HEK293 (cell line): ENCODE measurements at regions of chr2 and their contacts with region 1.

Region 1: GRCh38 chr2:175326801-175327200 is 145.3 kb upstream of the ATP5MC3 start:
- H3K4me3 ChIP-seq: no peak overlapping the region
- H3K27ac ChIP-seq: no peak overlapping the region
- H3K4me1 ChIP-seq: no peaks in the 10 kb centered on the region
- CTCF ChIP-seq: no peak

Region 2: DNA sequence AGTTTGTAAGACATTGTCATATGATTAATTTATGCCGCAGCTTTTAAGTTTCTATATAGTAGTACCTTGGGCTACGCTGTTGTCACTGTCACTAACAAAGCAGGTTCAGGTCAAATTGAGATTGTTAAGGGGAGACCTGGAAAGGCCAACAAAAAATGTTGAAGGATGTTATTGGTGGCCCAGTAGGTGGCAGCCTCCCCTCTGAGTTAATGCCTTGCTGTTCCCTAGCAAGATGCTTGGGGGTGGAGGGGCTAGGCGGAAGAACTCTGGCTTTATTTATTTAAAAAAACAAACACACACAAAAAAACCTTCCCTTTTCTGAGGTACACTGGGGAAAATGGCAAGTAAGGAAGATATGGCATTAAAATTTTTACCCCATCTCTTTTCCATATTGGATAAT is 17.0 kb before region 1 on chr2:
- CTCF ChIA-PET with region 1: interaction called, 21 read pairs
- POLR2A ChIA-PET with region 1: no interaction called
- H3K4me3 ChIP-seq: no peak overlapping the region
- H3K27ac ChIP-seq: no peak overlapping the region
- H3K4me1 ChIP-seq: no peaks in the 10 kb centered on the region
- CTCF ChIP-seq: peak; percentile 64